ENCODE measurements at regions of chr3 and their contacts with region 1.

Region 1: GRCh38 chr3:45948311-45948781 is 5.1 kb downstream of the CXCR6 start:
- DNase-seq: no peak
- H3K4me3 ChIP-seq: no peak overlapping the region
- H3K4me3 Mint-ChIP-seq: peak overlapping the region; percentile 19 to 94 (median 73)
- H3K27ac ChIP-seq: no peak overlapping the region
- H3K27ac Mint-ChIP-seq: peak overlapping the region; percentile 69 to 95 (median 92)
- H3K4me1 ChIP-seq: peaks cover 93% of the 10 kb centered on the region
- H3K4me1 Mint-ChIP-seq: peaks cover 95 to 99% (median 99%) of the 10 kb centered on the region in 3 donors
- H3K27me3 ChIP-seq: no peaks in the 10 kb centered on the region
- H3K27me3 Mint-ChIP-seq: no peaks in the 10 kb centered on the region

Region 2: DNA sequence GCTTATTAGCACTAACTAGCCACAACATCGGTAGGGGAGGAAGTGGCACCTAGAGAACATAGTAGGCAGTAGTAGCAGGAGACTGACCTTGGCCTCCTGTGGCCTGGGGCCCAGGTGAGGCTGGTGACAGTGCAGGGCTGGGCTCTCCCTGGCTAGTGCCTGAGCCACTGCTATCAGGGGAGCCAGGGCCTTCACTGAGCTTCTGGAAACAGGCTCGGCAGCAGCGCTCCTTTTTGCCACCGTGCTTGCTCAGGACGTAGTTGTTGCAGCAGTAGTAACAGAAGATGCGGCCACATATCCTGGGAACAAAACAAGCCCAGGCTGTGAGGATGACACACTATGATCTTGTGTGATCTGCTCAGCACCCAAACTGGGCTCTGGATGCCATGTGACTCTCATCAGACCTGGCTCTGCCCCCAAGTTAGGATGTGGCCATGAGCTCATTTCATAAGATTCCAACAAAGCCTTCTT is 10.0 kb after region 1 on chr3:
- CTCF ChIA-PET with region 1: interaction called, 22 read pairs
- POLR2A ChIA-PET with region 1: interaction called, 3 read pairs
- DNase-seq: peak in 1 of 5 donors; percentile 51
- H3K4me3 ChIP-seq: no peak overlapping the region
- H3K4me3 Mint-ChIP-seq: peak overlapping the region; percentile 3 to 84 (median 56)
- H3K27ac ChIP-seq: no peak overlapping the region
- H3K27ac Mint-ChIP-seq: peak overlapping the region; percentile 81 to 95 (median 92)
- H3K4me1 ChIP-seq: peaks cover 36% of the 10 kb centered on the region
- H3K4me1 Mint-ChIP-seq: peaks cover 76 to 90% (median 78%) of the 10 kb centered on the region in 3 donors
- H3K27me3 ChIP-seq: no peaks in the 10 kb centered on the region
- H3K27me3 Mint-ChIP-seq: no peaks in the 10 kb centered on the region

Region 3: GRCh38 chr3:45968706-45969105 is 20.4 kb after region 1 on chr3:
- CTCF ChIA-PET with region 1: interaction called, 16 read pairs
- POLR2A ChIA-PET with region 1: interaction called, 14 read pairs
- DNase-seq: no peak
- H3K4me3 ChIP-seq: no peak overlapping the region
- H3K4me3 Mint-ChIP-seq: peak overlapping the region in 4 of 7 donors; percentile 44 to 83 (median 53)
- H3K27ac ChIP-seq: no peak overlapping the region
- H3K27ac Mint-ChIP-seq: peak overlapping the region in 7 of 8 donors; percentile 60 to 94 (median 80)
- H3K4me1 ChIP-seq: peaks cover 82% of the 10 kb centered on the region
- H3K4me1 Mint-ChIP-seq: peaks cover 89 to 96% (median 94%) of the 10 kb centered on the region in 3 donors
- H3K27me3 ChIP-seq: no peaks in the 10 kb centered on the region
- H3K27me3 Mint-ChIP-seq: no peaks in the 10 kb centered on the region

Measured in CD8-positive, alpha-beta memory T cell (primary cell).